BJ (cell line): ENCODE measurements at regions of chr16 and their contacts with region 1.

Region 1: DNA sequence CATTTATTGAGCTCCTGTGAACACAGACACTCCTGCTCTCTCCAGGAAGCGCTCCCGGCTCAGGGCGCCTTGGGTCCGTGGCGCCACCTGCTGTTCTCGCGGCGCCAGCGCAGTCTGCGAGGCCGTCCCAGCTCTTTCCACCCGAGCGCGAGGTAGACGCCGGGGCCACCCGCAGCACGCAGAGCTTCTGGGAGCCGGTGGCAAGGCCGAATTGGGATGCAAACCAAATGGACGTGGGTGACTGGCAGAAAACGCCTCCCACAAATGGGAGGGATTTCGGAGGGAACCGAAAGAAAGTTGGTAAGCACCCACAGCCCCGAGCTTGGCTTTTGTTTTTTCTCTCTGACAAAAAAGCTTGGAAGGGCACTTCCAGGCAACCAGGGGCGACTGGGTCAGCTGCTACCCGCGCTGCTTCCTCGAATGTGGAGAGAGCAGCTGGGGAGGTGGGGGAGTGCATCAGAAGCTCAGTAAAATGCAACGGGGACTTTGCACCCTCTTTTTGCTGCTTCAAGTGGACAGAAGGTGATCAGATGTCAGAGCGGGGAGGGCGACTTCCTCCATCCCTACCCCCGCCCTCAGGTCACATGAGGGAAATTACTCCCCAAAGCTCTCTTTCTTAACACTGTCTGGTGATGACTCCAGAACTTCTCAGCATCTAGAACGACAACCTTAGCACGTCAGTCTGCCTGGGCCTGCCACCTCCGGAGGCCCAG is 13.5 kb upstream of the N4BP1 start:
- DNase-seq: no peak
- H3K4me3 ChIP-seq: peak overlapping the region; percentile 45
- H3K27me3 ChIP-seq: peaks cover 4% of the 10 kb centered on the region; the same call in 1 of the 2 replicates
- CTCF ChIP-seq: peak; percentile 100

Region 2: DNA sequence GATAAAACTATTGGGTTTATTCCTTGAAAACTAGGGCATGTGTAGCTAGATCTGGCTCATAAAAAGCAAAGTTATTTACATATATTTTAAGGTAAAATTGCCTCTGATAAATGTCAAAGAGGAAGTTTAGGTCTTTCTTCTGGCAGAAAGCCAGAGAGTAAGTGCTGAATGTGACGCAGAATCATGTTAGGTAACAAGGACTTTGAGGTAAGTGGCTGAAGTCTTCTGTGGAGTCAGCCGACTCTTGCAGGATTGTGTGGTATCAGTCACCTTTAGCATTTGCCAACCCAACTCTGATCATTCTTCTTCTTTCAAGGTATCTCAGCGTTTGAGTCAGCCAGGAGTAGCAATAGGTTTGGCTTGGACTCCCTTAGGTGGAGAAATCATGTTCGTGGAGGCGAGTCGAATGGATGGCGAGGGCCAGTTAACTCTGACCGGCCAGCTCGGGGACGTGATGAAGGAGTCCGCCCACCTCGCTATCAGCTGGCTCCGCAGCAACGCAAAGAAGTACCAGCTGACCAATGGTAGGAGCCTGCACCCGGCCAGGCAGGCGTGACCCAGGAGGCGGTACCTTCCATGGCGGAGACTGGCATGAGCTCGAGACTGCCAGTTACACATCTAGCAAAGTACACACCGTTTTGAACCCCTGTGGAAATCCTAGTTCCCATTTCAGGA is 276.1 kb before region 1 on chr16:
- CTCF ChIA-PET with region 1: interaction called, 36 read pairs
- POLR2A ChIA-PET with region 1: interaction called, 3 read pairs
- DNase-seq: no peak
- H3K4me3 ChIP-seq: no peak overlapping the region
- H3K27me3 ChIP-seq: no peaks in the 10 kb centered on the region
- CTCF ChIP-seq: no peak

Region 3: GRCh38 chr16:48365581-48366164 is 257.8 kb before region 1 on chr16:
- CTCF ChIA-PET with region 1: interaction called, 19 read pairs
- POLR2A ChIA-PET with region 1: no interaction called
- DNase-seq: peak; percentile 50
- H3K4me3 ChIP-seq: peak overlapping the region; percentile 61
- H3K27me3 ChIP-seq: no peaks in the 10 kb centered on the region
- CTCF ChIP-seq: peak; percentile 11; the same call in 1 of the 2 replicates

Region 4: GRCh38 chr16:48542020-48542473 is 81.4 kb before region 1 on chr16:
- CTCF ChIA-PET with region 1: interaction called, 21 read pairs
- POLR2A ChIA-PET with region 1: no interaction called
- DNase-seq: no peak
- H3K4me3 ChIP-seq: no peak overlapping the region
- H3K27me3 ChIP-seq: no peaks in the 10 kb centered on the region
- CTCF ChIP-seq: peak; percentile 71

Region 5: GRCh38 chr16:48561960-48562393 is 61.5 kb before region 1 on chr16:
- CTCF ChIA-PET with region 1: interaction called, 12 read pairs
- POLR2A ChIA-PET with region 1: no interaction called
- DNase-seq: no peak
- H3K4me3 ChIP-seq: no peak overlapping the region
- H3K27me3 ChIP-seq: no peaks in the 10 kb centered on the region
- CTCF ChIP-seq: no peak

Region 6: DNA sequence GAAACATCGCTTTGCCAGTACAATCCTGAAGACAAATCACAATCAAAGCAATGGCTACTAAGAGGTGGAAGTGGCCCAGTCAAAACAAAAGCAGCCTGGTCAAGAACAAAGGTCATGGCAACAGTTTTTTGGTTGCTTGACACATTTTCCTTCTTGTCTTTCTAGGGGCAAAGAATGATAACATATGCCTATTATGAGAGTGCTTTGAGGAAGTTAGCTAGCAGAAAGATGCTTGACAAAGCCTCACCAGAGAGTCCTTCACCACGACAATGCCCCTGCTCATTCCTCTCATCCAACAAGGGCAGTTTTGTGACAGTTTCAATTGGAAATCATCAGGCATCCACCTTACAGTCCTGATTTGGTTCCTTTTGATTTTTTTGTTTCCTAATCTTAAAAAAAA is 18.3 kb after region 1 on chr16:
- CTCF ChIA-PET with region 1: no interaction called
- POLR2A ChIA-PET with region 1: no interaction called
- DNase-seq: no peak
- H3K4me3 ChIP-seq: no peak overlapping the region
- H3K27me3 ChIP-seq: no peaks in the 10 kb centered on the region
- CTCF ChIP-seq: no peak